Activated B cell treated with CpG ODN at 0.5 μM for 24 hours (primary cell): ENCODE measurements at regions of chrX and their contacts with region 1.

Region 1: GRCh38 chrX:24498975-24499374 is 33.9 kb downstream of the PDK3 start:
- DNase-seq: no peak
- ATAC-seq: peak; percentile 60
- H3K4me3 Mint-ChIP-seq: no peak overlapping the region
- H3K27ac Mint-ChIP-seq: no peak overlapping the region
- H3K4me1 Mint-ChIP-seq: peaks cover 12% of the 10 kb centered on the region
- H3K27me3 Mint-ChIP-seq: no peaks in the 10 kb centered on the region
- CTCF ChIP-seq: no peak

Region 2: DNA sequence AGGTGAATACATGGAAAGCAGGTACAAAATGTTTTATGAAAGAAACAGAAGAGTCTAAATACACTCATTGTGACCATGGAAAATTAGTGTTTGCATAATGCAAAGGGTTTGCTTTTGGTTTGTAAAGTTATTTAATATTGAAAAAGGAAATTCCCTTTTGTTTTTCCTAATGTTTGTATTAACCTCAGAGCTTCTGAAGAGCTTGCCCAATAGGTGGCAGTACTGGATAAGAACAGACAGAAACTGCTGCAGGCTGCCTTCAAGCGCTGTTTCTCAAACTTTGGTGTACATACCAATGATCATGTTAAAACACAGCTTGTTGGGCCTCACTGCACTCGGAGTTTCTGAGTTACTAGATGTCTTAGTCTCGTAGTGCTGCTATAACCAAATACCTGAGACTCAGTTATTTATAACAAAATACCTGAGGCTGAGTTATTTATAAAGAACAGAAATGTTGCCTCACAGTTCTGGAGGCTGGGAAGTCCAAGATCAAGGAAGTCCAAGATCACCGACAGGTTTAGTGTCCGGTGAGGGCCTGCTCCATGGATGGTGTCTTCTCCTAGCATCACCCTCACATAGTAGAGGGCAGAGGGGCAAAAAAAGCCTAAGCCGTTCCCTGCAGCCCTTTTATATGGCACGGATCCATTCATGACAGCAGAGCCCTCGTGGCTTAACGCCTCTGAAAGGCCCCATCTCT is 239.3 kb before region 1 on chrX:
- CTCF ChIA-PET with region 1: interaction called, 4 read pairs
- POLR2A ChIA-PET with region 1: no interaction called
- intact Hi-C with region 1: loop called (anchors 1 kb)
- DNase-seq: no peak
- ATAC-seq: no peak
- H3K4me3 Mint-ChIP-seq: no peak overlapping the region
- H3K27ac Mint-ChIP-seq: no peak overlapping the region
- H3K4me1 Mint-ChIP-seq: peaks cover 8% of the 10 kb centered on the region
- H3K27me3 Mint-ChIP-seq: no peaks in the 10 kb centered on the region
- CTCF ChIP-seq: no peak

Region 3: DNA sequence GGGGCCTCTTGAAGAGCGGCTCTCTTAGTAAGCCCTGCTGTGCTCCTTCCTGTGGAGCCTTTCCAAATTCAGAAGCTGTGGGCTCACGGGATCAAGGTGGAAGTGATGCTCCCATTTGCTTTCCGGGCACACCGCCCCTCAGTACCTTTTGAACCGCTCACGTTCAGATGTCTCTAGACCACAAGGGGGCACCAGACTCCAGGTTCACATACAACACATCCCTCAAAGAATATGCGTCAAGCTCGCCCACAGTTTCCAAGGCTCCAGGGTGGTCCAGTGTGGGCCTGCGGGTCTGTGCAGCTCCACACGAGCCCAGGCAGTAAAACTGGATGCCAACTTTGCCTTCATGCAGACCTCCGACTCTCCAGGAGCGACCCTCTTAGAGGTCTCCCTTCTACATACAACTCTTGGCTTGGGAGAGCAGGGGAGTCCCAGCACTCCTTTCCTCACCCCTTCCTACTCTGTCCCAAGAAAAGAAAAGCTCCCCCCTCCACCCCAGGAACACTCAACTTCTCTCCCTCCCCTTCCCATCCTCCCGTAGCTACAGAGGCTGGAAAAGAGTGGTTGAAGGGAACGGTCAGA is 127.5 kb before region 1 on chrX:
- CTCF ChIA-PET with region 1: interaction called, 21 read pairs
- POLR2A ChIA-PET with region 1: no interaction called
- intact Hi-C with region 1: loop called (anchors 1 kb)
- DNase-seq: peak; percentile 15
- ATAC-seq: peak; percentile 66
- H3K4me3 Mint-ChIP-seq: peak overlapping the region; percentile 24
- H3K27ac Mint-ChIP-seq: no peak overlapping the region
- H3K4me1 Mint-ChIP-seq: peaks cover 7% of the 10 kb centered on the region
- H3K27me3 Mint-ChIP-seq: peaks cover 10% of the 10 kb centered on the region
- CTCF ChIP-seq: no peak

Region 4: GRCh38 chrX:24395775-24396174 is 103.2 kb before region 1 on chrX:
- CTCF ChIA-PET with region 1: interaction called, 172 read pairs
- POLR2A ChIA-PET with region 1: no interaction called
- intact Hi-C with region 1: loop called (anchors 1 kb)
- DNase-seq: no peak
- ATAC-seq: peak; percentile 70
- H3K4me3 Mint-ChIP-seq: no peak overlapping the region
- H3K27ac Mint-ChIP-seq: no peak overlapping the region
- H3K4me1 Mint-ChIP-seq: no peaks in the 10 kb centered on the region
- H3K27me3 Mint-ChIP-seq: peaks cover 5% of the 10 kb centered on the region
- CTCF ChIP-seq: peak; percentile 49

Region 5: GRCh38 chrX:24464836-24465531 is 34.0 kb before region 1 on chrX and contains the start of gene PDK3:
- CTCF ChIA-PET with region 1: interaction called, 4 read pairs
- POLR2A ChIA-PET with region 1: interaction called, 6 read pairs
- intact Hi-C with region 1: loop called (anchors 1 kb)
- DNase-seq: peak; percentile 77
- ATAC-seq: peak; percentile 95
- H3K4me3 Mint-ChIP-seq: peak within 1 kb of the TSS; percentile 84
- H3K27ac Mint-ChIP-seq: peak within 1 kb of the TSS; percentile 83
- H3K4me1 Mint-ChIP-seq: peaks cover 47% of the 10 kb centered on the region
- H3K27me3 Mint-ChIP-seq: no peaks in the 10 kb centered on the region
- CTCF ChIP-seq: no peak
- total RNA-seq, gene PDK3: 13.6 and 13.9 TPM in 2 replicates

Region 6: DNA sequence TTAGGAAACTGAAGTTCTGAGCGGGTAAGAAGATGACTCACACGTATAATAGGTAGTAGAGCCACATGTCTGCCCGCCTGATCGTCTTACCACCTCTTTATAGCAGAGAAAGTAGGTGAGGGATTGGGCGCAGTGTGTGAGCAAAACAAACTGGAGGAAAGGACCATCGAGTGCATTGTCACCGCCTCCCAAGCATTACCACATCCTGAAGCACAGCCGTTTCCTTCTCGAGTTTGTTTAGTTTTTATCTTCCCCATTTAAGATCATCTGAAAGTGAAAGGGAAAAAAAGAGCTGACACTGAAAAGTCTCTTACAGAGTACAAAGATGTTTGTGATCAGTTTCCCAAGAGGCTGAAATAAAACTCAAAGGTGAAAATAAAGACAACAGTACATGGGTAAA is 19.1 kb before region 1 on chrX:
- CTCF ChIA-PET with region 1: interaction called, 6 read pairs
- POLR2A ChIA-PET with region 1: no interaction called
- intact Hi-C with region 1: loop called (anchors 2 kb)
- DNase-seq: no peak
- ATAC-seq: peak; percentile 94
- H3K4me3 Mint-ChIP-seq: peak overlapping the region; percentile 76
- H3K27ac Mint-ChIP-seq: peak overlapping the region; percentile 94
- H3K4me1 Mint-ChIP-seq: peaks cover 51% of the 10 kb centered on the region
- H3K27me3 Mint-ChIP-seq: no peaks in the 10 kb centered on the region
- CTCF ChIP-seq: no peak

Region 7: DNA sequence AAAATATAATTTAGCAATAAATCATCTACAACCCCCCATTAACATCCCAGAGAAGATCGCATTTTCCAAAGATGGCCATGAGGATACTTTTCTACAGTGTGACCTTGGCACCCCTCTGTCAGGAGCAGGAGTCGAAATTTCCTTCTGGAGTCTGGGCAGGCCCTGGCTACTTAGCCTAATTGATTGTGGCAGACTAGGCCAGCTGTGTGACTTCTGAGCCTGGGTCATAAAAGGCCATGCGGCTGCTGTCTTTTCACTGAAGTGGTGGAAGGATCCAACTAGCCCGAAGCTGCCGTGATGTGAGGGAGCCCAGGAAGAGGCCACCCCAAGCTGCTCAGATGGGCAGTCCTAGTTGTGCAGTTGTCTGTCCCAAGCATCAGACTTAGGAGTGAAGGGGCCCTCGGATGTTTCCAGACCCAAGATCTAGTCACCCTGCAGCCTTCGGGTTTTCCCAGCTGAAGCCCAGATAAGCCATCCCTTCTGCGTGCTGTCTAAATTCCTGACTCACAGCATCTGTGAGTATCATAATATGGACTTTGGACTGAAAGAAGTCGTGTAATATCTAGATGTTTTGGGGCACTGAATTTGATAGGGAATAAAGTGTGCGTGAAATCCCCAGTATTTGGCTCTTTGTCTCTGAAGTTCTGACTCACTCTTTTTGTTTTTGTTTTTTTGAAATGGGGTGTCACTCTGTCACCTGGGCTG is 12.8 kb before region 1 on chrX:
- CTCF ChIA-PET with region 1: interaction called, 13 read pairs
- POLR2A ChIA-PET with region 1: no interaction called
- intact Hi-C with region 1: loop called (anchors 2 kb)
- DNase-seq: no peak
- ATAC-seq: no peak
- H3K4me3 Mint-ChIP-seq: no peak overlapping the region
- H3K27ac Mint-ChIP-seq: no peak overlapping the region
- H3K4me1 Mint-ChIP-seq: peaks cover 7% of the 10 kb centered on the region
- H3K27me3 Mint-ChIP-seq: no peaks in the 10 kb centered on the region
- CTCF ChIP-seq: no peak